OCI-LY7 (cell line): ENCODE measurements at regions of chr11 and their contacts with region 1.

Region 1: GRCh38 chr11:73126804-73127480 is 15.2 kb downstream of the FCHSD2 start:
- DNase-seq: no peak
- H3K4me3 ChIP-seq: no peak overlapping the region
- H3K27ac ChIP-seq: no peak overlapping the region
- H3K4me1 ChIP-seq: no peaks in the 10 kb centered on the region
- CTCF ChIP-seq: no peak

Region 2: DNA sequence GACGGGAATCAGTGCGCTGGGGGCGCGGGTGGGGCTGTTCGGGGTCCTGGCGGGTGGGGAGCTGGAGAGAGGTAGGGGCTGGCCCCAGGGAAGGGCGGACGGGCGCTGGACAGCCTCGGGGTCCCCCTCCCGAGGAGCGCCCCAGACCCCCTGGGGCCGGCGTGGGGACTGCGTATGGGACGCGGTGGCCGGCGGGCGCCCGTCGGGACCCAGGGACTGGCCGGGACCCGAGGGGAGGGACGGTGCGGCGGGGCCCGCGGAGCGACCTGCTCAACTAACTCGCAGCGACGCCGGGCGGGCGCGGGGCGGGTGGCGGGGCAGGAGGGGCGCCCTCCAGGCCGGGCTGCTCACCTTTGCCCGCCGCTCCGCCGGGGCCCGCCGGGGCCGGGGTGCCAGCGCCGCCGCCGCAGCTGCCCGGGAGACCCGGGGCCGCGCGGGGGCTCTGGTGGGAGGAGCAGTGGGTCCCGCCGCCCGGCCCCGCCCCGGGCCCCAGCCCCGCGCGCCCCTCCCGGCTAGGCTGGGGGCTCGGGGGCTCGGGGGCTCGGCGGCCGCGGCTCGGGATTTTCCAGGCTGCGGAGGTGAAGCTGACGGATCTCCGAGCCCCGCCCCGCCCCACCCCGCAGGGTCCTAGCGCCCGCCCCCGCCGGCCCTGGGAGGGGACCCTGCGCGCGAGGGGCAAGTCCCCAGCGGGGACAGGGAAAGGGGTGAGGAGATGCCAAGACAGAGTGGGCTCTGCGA is 345.5 kb before region 1 on chr11:
- CTCF ChIA-PET with region 1: no interaction called
- POLR2A ChIA-PET with region 1: no interaction called
- intact Hi-C with region 1: no loop called
- DNase-seq: peak; percentile 50
- H3K4me3 ChIP-seq: peak overlapping the region; percentile 59
- H3K27ac ChIP-seq: no peak overlapping the region
- H3K4me1 ChIP-seq: peaks cover 10% of the 10 kb centered on the region
- CTCF ChIP-seq: no peak

Region 3: GRCh38 chr11:72951193-72951592 is 175.7 kb before region 1 on chr11:
- CTCF ChIA-PET with region 1: no interaction called
- POLR2A ChIA-PET with region 1: no interaction called
- intact Hi-C with region 1: no loop called
- DNase-seq: no peak
- H3K4me3 ChIP-seq: no peak overlapping the region
- H3K27ac ChIP-seq: peak overlapping the region; percentile 50
- H3K4me1 ChIP-seq: peaks cover 23% of the 10 kb centered on the region
- CTCF ChIP-seq: no peak

Region 4: DNA sequence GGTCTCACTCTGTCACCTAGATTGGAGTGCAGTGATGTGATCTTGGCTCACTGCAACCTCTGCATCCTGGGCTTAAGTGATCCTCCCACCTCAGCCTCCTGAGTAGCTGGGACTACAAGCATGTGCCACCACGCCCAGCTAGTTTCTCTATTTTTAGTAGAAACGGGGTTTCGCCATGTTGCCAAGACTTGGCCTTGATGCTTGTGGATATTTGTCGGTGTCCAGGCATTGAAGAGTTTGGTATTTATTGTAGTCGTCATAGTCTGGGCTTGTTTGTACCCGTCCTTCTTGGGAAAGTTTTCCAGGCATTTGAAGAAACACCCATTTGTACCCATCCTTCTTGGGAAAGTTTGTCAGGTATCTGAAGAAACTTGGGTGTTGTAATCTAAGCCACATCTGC is 13.5 kb before region 1 on chr11:
- CTCF ChIA-PET with region 1: no interaction called
- POLR2A ChIA-PET with region 1: interaction called, 13 read pairs
- intact Hi-C with region 1: no loop called
- DNase-seq: no peak
- H3K4me3 ChIP-seq: no peak overlapping the region
- H3K27ac ChIP-seq: no peak overlapping the region
- H3K4me1 ChIP-seq: no peaks in the 10 kb centered on the region
- CTCF ChIP-seq: no peak